ENCODE measurements at regions of chr1 and their contacts with region 1.

Region 1: GRCh38 chr1:40691538-40692428 is at the start of gene NFYC:
- DNase-seq: peak; percentile 96
- H3K4me3 ChIP-seq: peak within 1 kb of the TSS; percentile 49 to 77 (median 73)
- H3K27ac ChIP-seq: peak within 1 kb of the TSS; percentile 90
- H3K4me1 ChIP-seq: peaks cover 13% of the 10 kb centered on the region
- H3K27me3 ChIP-seq: no peaks in the 10 kb centered on the region
- CTCF ChIP-seq: no peak
- total RNA-seq, gene NFYC: 32.0 to 48.7 TPM

Region 2: GRCh38 chr1:40711465-40712404 is 20.0 kb after region 1 on chr1:
- CTCF ChIA-PET with region 1: interaction called, 4 read pairs
- dilution Hi-C with region 1: no loop called
- in situ Hi-C with region 1: no loop called
- intact Hi-C with region 1: loop called (anchors 1 kb)
- DNase-seq: peak; percentile 92
- H3K4me3 ChIP-seq: peak overlapping the region; percentile 64 to 83 (median 69)
- H3K27ac ChIP-seq: peak overlapping the region; percentile 55
- H3K4me1 ChIP-seq: peaks cover 44% of the 10 kb centered on the region
- H3K27me3 ChIP-seq: no peaks in the 10 kb centered on the region
- CTCF ChIP-seq: no peak

Region 3: GRCh38 chr1:40753142-40753882 is 61.5 kb after region 1 on chr1:
- CTCF ChIA-PET with region 1: no interaction called
- dilution Hi-C with region 1: no loop called
- in situ Hi-C with region 1: no loop called
- intact Hi-C with region 1: loop called (anchors 2 kb)
- DNase-seq: no peak
- H3K4me3 ChIP-seq: no peak overlapping the region
- H3K27ac ChIP-seq: no peak overlapping the region
- H3K4me1 ChIP-seq: peaks cover 11% of the 10 kb centered on the region
- H3K27me3 ChIP-seq: no peaks in the 10 kb centered on the region
- CTCF ChIP-seq: no peak

Region 4: DNA sequence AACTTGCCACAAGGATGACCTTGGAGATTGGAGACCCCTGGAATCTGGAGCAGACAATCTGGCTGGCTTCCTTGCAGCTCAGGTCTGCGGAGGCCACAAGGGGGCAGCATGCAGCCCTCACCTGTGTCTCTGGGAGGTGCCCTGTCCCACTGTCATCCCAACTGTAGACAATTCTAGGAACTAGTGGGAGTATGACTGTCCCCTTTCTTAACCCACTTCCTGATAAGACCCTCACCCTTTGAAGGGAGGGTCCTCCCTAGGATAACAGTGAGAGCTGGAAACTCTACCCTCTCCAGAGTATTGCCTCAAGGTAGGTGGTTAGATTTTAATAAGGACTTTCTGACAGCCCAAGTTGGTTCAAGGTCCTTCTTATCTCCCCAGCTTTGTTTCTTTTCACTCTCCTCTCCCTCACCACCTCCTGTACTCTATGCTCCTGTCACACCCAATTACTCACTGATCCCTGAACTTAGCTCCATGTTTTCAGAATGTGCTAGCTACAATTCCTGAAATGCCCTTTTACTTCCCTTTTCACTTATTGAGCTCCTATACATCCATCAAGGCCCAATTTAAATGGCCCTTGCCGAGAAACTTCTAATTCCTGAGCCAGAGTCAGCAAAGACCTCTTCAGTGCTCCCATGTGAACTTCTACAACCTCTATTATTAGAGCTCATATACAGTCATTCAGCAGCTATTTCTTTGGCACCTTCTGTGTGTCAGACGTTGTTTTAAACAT is 82.6 kb after region 1 on chr1:
- CTCF ChIA-PET with region 1: interaction called, 3 read pairs
- dilution Hi-C with region 1: no loop called
- in situ Hi-C with region 1: no loop called
- intact Hi-C with region 1: loop called (anchors 1 kb)
- DNase-seq: no peak
- H3K4me3 ChIP-seq: no peak overlapping the region
- H3K27ac ChIP-seq: no peak overlapping the region
- H3K4me1 ChIP-seq: peaks cover 13% of the 10 kb centered on the region
- H3K27me3 ChIP-seq: no peaks in the 10 kb centered on the region
- CTCF ChIP-seq: peak; percentile 83 to 84

Region 5: GRCh38 chr1:41255978-41256377 is 564.2 kb after region 1 on chr1:
- CTCF ChIA-PET with region 1: no interaction called
- dilution Hi-C with region 1: no loop called
- in situ Hi-C with region 1: no loop called
- intact Hi-C with region 1: no loop called
- DNase-seq: no peak
- H3K4me3 ChIP-seq: no peak overlapping the region
- H3K27ac ChIP-seq: no peak overlapping the region
- H3K4me1 ChIP-seq: no peaks in the 10 kb centered on the region
- H3K27me3 ChIP-seq: no peaks in the 10 kb centered on the region
- CTCF ChIP-seq: no peak

Measured in mammary epithelial cell (primary cell).